Head of caudate nucleus (tissue), 42 donors: ENCODE measurements at regions of chr11 and their contacts with region 1.

Region 1: GRCh38 chr11:71977743-71978418 is 20.8 kb upstream of the IL18BP start:
- DNase-seq: peak in 38 of 42 donors; percentile 10 to 90 (median 74)

Region 2: DNA sequence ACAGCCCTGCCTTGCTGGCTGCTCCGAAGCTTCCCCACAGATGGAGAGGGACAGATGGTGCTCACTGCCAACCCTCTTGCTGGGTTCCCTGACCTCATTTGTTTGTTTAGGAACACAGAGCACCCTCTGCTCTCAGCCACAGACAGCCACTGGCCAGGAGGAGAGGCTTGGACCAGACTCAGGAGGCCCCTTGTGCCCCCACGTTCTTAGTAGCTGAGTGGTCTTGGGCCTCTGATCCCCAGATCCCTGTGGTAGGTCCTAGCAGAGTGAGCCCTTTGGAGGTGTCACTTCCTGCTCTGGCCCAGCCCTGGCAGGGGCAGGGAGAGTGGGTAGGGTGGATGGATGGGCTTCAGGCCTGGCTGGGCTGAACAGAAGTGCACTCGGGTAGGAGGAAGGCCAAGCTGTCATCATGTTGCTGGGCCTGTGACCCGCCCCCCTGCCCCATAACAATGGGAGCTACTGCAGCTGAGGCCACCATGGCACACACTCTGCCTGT is 613.7 kb before region 1 on chr11:
- intact Hi-C with region 1: no loop called
- DNase-seq: peak in 39 of 42 donors; percentile 15 to 83 (median 59)

Region 3: DNA sequence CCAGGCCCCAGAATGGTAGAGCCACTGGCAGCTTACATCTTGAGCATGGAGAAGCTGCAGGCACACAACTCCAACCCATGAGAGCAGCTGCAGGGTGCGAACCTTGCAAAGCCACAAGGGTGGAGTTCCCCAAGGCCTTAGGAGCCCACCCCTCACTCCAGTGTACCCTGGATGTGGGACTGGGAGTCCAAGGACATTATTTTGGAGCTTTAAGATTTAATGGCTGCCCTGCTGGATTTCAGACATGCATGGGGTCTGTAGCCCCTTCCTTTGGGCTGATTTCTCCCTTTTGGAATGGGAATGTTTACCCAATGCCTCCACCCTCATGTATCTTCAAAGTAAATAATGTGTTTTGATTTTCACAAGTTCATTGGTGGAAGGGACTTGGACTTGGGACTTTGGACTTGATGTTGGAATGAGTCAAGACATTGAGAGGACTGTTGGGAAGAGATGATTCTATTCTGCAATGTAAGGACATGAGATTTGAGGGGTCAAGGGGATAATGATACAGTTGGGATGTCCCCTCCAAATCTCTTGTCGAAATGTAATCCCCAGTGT is 451.9 kb before region 1 on chr11:
- intact Hi-C with region 1: no loop called
- DNase-seq: no peak

Region 4: GRCh38 chr11:72430741-72431570 is 453.1 kb after region 1 on chr11:
- intact Hi-C with region 1: loop called (anchors 5 kb)
- DNase-seq: peak in 40 of 42 donors; percentile 23 to 79 (median 54)